A673 (cell line): ENCODE measurements at regions of chr1 and their contacts with region 1.

Region 1: GRCh38 chr1:35715568-35716002 is 3.1 kb downstream of the C1orf216 start:
- DNase-seq: peak; percentile 91
- H3K4me3 ChIP-seq: no peak overlapping the region
- H3K27ac ChIP-seq: no peak overlapping the region
- H3K4me1 ChIP-seq: peaks cover 13% of the 10 kb centered on the region
- H3K27me3 ChIP-seq: no peaks in the 10 kb centered on the region
- CTCF ChIP-seq: peak; percentile 92

Region 2: DNA sequence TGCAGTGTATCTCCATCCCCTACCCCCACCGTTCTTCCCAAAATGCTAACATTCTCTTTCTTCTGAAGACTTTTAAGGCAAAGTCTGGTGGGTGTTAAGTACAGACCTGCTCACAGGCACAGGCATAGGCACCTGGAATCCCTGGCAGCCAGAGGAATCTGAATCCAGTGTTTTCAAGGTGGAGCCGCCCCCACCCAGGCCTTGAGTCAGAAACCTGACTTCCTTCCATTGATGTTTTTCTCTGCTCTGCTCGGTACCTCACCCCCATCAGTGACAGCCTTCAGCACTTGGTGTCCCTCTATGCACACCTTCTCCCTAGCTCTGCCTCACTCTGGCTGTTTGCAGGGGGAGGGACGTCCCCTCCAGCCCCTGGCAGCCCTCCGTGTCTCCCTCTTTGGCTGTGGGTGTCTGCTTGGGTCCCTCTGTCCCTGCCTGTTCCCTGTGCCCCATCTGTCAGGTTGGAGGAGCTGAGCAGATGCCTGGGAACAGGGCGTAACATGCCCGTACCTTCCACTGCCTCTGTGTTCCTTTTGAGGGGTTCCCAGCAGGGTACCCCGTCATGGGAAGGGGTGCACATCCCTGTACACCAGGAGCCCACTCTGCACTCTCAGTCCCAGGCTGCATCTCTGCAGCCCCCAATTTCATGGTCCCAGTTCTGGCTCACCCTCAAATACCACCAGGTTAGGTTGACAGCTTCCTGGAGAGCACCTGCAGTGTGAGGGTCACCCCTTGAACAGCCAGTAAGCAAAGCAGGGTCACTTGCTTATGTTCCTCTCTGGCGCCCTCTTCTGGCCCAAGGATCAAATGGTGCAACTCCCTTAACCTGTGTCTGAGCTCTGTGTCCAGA is 151.3 kb before region 1 on chr1:
- CTCF ChIA-PET with region 1: interaction called, 23 read pairs
- POLR2A ChIA-PET with region 1: no interaction called
- intact Hi-C with region 1: loop called (anchors 2 kb)
- DNase-seq: peak; percentile 71
- H3K4me3 ChIP-seq: no peak overlapping the region
- H3K27ac ChIP-seq: no peak overlapping the region
- H3K4me1 ChIP-seq: peaks cover 2% of the 10 kb centered on the region
- H3K27me3 ChIP-seq: no peaks in the 10 kb centered on the region
- CTCF ChIP-seq: peak; percentile 79

Region 3: DNA sequence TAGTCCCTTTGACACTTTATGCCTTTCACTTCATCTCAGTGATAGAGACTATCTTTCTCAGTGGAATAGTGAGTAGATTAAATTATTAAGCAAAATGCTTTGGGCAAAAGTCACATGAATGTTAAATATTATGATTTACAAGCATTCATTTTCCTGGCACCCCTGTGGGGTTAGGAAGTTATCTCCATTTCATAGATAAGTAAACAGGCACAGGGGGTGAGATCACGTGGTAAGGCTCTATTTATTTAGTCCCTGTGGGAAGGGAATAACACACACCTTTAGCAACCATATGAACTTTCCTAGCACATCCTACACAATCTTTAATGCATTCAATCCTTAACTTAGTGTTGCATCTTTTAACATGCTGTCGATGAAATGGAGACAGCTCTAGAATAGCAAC is 86.5 kb before region 1 on chr1:
- CTCF ChIA-PET with region 1: interaction called, 11 read pairs
- POLR2A ChIA-PET with region 1: no interaction called
- intact Hi-C with region 1: no loop called
- DNase-seq: no peak
- H3K4me3 ChIP-seq: no peak overlapping the region
- H3K27ac ChIP-seq: no peak overlapping the region
- H3K4me1 ChIP-seq: peaks cover 5% of the 10 kb centered on the region
- H3K27me3 ChIP-seq: no peaks in the 10 kb centered on the region
- CTCF ChIP-seq: no peak

Region 4: DNA sequence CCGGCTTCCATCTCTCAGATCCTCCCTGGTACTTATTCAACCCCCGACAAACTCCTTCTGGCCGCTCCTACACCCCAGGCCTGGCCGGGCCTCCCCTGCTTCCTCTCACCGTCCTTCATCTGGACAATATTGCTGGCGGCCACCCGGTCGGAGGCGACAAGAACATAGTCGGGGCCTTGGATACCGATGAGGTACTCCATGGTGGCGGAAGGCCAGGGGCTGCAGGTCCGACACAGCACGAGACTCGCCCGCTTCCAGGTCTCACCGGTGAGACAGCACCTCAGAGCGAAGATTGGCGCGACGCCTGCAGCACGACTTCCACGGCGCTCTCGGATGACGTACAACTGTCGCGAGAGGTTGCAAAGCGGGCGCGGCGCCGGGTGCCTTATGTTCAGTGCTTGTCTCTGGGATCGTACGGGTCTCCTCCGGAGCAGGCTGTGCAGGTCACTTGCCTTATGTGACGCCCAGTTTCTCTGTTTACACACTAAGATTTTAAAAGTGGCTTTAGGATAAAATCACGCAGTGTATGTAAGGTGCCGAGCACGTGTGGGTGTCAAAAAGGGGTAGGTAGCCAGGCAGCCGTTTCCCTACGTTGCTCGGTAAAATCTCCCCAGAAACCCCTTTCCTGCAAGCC is 74.2 kb before region 1 on chr1 and contains the start of gene PSMB2:
- CTCF ChIA-PET with region 1: interaction called, 4 read pairs
- POLR2A ChIA-PET with region 1: no interaction called
- intact Hi-C with region 1: loop called (anchors 5 kb)
- DNase-seq: peak; percentile 97
- H3K4me3 ChIP-seq: peak within 1 kb of the TSS; percentile 90
- H3K27ac ChIP-seq: peak within 1 kb of the TSS; percentile 92
- H3K4me1 ChIP-seq: peaks cover 23% of the 10 kb centered on the region
- H3K27me3 ChIP-seq: peaks cover 13% of the 10 kb centered on the region
- CTCF ChIP-seq: no peak
- total RNA-seq, gene PSMB2: 162 and 169 TPM in 2 replicates